IMR-90 (cell line): ENCODE measurements at regions of chr20 and their contacts with region 1.

Region 1: GRCh38 chr20:8131598-8132483 is at the start of gene PLCB1:
- DNase-seq: peak; percentile 78
- ATAC-seq: peak; percentile 89
- H3K4me3 ChIP-seq: peak within 1 kb of the TSS; percentile 69
- H3K27ac ChIP-seq: peak within 1 kb of the TSS; percentile 68
- H3K4me1 ChIP-seq: peaks cover 7% of the 10 kb centered on the region
- H3K27me3 ChIP-seq: no peaks in the 10 kb centered on the region
- CTCF ChIP-seq: peak; percentile 94
- POLR2A ChIP-seq: no peak
- RAD21 ChIP-seq: peak; percentile 93
- total RNA-seq, gene PLCB1: 16.1 and 17.5 TPM in 2 replicates

Region 2: DNA sequence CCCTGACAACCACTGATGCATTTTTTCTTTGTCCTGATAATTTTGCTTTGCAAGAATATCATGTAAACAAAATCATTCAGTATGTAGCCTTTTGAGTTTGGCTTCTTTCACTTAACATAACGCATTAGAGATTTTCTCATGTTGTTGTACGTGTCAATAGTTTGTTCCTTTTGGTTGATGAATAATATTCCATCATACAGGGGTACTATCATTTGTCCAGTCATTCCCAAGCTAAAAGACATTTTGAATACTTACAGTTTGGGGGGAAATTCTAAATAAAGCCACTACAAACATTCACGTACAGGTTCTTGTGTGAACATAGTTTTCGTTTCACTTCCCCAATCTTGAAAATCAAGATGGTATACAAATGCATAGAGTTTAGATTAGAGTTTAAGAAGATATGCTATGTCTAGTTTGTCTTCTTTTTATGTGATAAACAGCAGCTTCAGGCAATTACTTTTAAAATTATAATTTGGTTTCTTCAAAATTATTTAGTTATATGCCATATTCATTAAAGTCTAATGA is 196.8 kb before region 1 on chr20:
- CTCF ChIA-PET with region 1: interaction called, 5 read pairs
- POLR2A ChIA-PET with region 1: no interaction called
- dilution Hi-C with region 1: no loop called
- in situ Hi-C with region 1: no loop called
- intact Hi-C with region 1: loop called (anchors 1 kb)
- DNase-seq: no peak
- ATAC-seq: no peak
- H3K4me3 ChIP-seq: no peak overlapping the region
- H3K27ac ChIP-seq: no peak overlapping the region
- H3K4me1 ChIP-seq: no peaks in the 10 kb centered on the region
- H3K27me3 ChIP-seq: peaks cover 9% of the 10 kb centered on the region
- CTCF ChIP-seq: no peak
- POLR2A ChIP-seq: no peak
- RAD21 ChIP-seq: no peak

Region 3: GRCh38 chr20:8060977-8061376 is 70.9 kb before region 1 on chr20:
- CTCF ChIA-PET with region 1: no interaction called
- POLR2A ChIA-PET with region 1: no interaction called
- dilution Hi-C with region 1: no loop called
- in situ Hi-C with region 1: no loop called
- intact Hi-C with region 1: loop called (anchors 5 kb)
- DNase-seq: no peak
- ATAC-seq: no peak
- H3K4me3 ChIP-seq: no peak overlapping the region
- H3K27ac ChIP-seq: no peak overlapping the region
- H3K4me1 ChIP-seq: peaks cover 2% of the 10 kb centered on the region
- H3K27me3 ChIP-seq: no peaks in the 10 kb centered on the region
- CTCF ChIP-seq: no peak
- POLR2A ChIP-seq: no peak
- RAD21 ChIP-seq: no peak

Region 4: DNA sequence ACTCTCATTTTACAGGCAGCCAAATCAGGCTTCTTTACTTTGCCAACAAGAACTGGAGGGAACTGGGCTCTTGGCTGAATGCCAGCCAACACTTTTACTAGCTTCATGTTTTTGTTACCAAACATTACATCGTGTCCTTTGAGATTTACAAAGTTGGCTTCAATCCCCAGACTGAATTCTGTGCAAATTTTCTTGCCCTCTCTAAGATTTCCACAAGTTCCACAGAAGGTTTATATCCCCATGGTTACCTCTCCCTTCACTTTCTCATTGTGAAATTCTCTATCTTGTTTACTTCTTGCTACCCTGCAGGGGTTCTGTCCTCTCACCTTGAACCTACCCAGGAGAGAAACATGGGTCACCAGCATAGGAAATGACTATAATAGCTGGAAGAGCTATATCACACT is 37.4 kb before region 1 on chr20:
- CTCF ChIA-PET with region 1: no interaction called
- POLR2A ChIA-PET with region 1: no interaction called
- dilution Hi-C with region 1: no loop called
- in situ Hi-C with region 1: no loop called
- intact Hi-C with region 1: no loop called
- DNase-seq: peak; percentile 22
- ATAC-seq: no peak
- H3K4me3 ChIP-seq: no peak overlapping the region
- H3K27ac ChIP-seq: no peak overlapping the region
- H3K4me1 ChIP-seq: 0 out of 2 replicates have a peak, but pooled peaks cover 1% of the 10 kb centered on the region
- H3K27me3 ChIP-seq: no peaks in the 10 kb centered on the region
- CTCF ChIP-seq: no peak
- POLR2A ChIP-seq: no peak
- RAD21 ChIP-seq: no peak

Region 5: GRCh38 chr20:8389381-8390036 is 257.7 kb after region 1 on chr20:
- CTCF ChIA-PET with region 1: interaction called, 4 read pairs
- POLR2A ChIA-PET with region 1: no interaction called
- dilution Hi-C with region 1: no loop called
- in situ Hi-C with region 1: loop called (anchors 5 kb)
- intact Hi-C with region 1: loop called (anchors 1 kb)
- DNase-seq: peak; percentile 59
- ATAC-seq: peak; percentile 27; the same call in 1 of the 2 replicates
- H3K4me3 ChIP-seq: no peak overlapping the region
- H3K27ac ChIP-seq: no peak overlapping the region
- H3K4me1 ChIP-seq: peaks cover 7% of the 10 kb centered on the region
- H3K27me3 ChIP-seq: no peaks in the 10 kb centered on the region
- CTCF ChIP-seq: peak; percentile 51
- POLR2A ChIP-seq: no peak
- RAD21 ChIP-seq: peak; percentile 41

Region 6: DNA sequence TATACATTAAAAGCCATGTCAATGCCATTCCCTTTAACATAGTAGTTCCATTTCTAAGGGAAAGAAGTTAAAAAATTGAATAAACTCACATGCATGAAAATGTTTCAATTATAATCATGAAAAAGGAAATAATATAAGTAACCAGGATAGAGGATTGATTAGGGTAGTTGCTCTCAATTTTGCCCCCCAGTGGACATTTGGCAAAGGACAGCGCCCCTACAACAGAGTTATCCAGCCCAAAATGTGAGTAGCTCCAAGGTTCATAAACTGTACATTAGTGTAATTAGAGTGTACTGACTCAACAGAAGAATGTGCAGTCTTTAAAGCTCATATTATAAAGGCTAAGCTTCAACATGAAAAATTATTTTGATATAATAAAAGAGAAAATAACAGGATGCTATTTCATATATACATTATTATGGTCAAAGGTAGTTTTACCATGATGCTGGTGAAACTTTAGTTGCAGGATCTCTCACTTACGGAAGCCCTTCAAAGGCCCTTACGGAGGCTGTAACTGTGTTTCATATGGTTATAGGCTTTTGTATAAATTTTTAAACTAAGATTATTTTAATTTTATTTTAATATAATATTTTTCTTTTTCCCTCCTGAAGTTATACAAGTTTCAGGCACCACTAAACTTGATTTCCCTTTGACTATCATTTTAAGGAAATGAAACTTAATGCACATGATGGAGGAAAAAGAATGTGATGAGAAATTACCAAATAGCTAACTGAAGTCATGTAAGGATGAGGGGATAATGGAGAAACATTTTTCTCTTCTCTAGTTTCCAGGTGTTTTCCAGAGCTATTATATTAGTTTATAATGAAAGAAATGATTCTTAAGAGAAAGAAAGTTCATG is 403.8 kb after region 1 on chr20:
- CTCF ChIA-PET with region 1: interaction called, 4 read pairs
- POLR2A ChIA-PET with region 1: no interaction called
- dilution Hi-C with region 1: no loop called
- in situ Hi-C with region 1: no loop called
- intact Hi-C with region 1: loop called (anchors 2 kb)
- DNase-seq: no peak
- ATAC-seq: no peak
- H3K4me3 ChIP-seq: no peak overlapping the region
- H3K27ac ChIP-seq: no peak overlapping the region
- H3K4me1 ChIP-seq: peaks cover 2% of the 10 kb centered on the region; the same call in 1 of the 2 replicates
- H3K27me3 ChIP-seq: no peaks in the 10 kb centered on the region
- CTCF ChIP-seq: peak; percentile 47
- POLR2A ChIP-seq: no peak
- RAD21 ChIP-seq: peak; percentile 42